ENCODE measurements at regions of chr19 and their contacts with region 1.

Region 1: GRCh38 chr19:49391581-49392399 is 3.7 kb downstream of the KASH5 start:
- DNase-seq: peak; percentile 87
- ATAC-seq: peak; percentile 91
- H3K4me3 Mint-ChIP-seq: no peak overlapping the region
- H3K27ac Mint-ChIP-seq: no peak overlapping the region
- H3K4me1 Mint-ChIP-seq: peaks cover 20% of the 10 kb centered on the region
- H3K27me3 Mint-ChIP-seq: peaks cover 16% of the 10 kb centered on the region
- CTCF ChIP-seq: peak; percentile 58

Region 2: GRCh38 chr19:49347846-49348245 is 43.9 kb before region 1 on chr19:
- CTCF ChIA-PET with region 1: no interaction called
- POLR2A ChIA-PET with region 1: no interaction called
- DNase-seq: peak; percentile 51
- ATAC-seq: peak; percentile 94
- H3K4me3 Mint-ChIP-seq: no peak overlapping the region
- H3K27ac Mint-ChIP-seq: peak overlapping the region; percentile 91
- H3K4me1 Mint-ChIP-seq: peaks cover 3% of the 10 kb centered on the region; the same call in 1 of the 2 replicates
- H3K27me3 Mint-ChIP-seq: no peaks in the 10 kb centered on the region
- CTCF ChIP-seq: no peak

Region 3: GRCh38 chr19:49403404-49404187 is 11.8 kb after region 1 on chr19:
- CTCF ChIA-PET with region 1: interaction called, 22 read pairs
- POLR2A ChIA-PET with region 1: interaction called, 7 read pairs
- DNase-seq: peak; percentile 81
- ATAC-seq: peak; percentile 98
- H3K4me3 Mint-ChIP-seq: peak overlapping the region; percentile 44
- H3K27ac Mint-ChIP-seq: peak overlapping the region; percentile 99
- H3K4me1 Mint-ChIP-seq: peaks cover 45% of the 10 kb centered on the region
- H3K27me3 Mint-ChIP-seq: peaks cover 4% of the 10 kb centered on the region; the same call in 1 of the 2 replicates
- CTCF ChIP-seq: no peak

Region 4: GRCh38 chr19:49421039-49421877 is 29.5 kb after region 1 on chr19:
- CTCF ChIA-PET with region 1: interaction called, 120 read pairs
- POLR2A ChIA-PET with region 1: no interaction called
- DNase-seq: peak; percentile 100
- ATAC-seq: peak; percentile 75
- H3K4me3 Mint-ChIP-seq: peak overlapping the region; percentile 49
- H3K27ac Mint-ChIP-seq: peak overlapping the region; percentile 84
- H3K4me1 Mint-ChIP-seq: peaks cover 78% of the 10 kb centered on the region
- H3K27me3 Mint-ChIP-seq: peaks cover 75% of the 10 kb centered on the region
- CTCF ChIP-seq: no peak

Region 5: GRCh38 chr19:49436369-49437017 is 44.7 kb after region 1 on chr19:
- CTCF ChIA-PET with region 1: interaction called, 33 read pairs
- POLR2A ChIA-PET with region 1: no interaction called
- DNase-seq: peak; percentile 98
- ATAC-seq: peak; percentile 67
- H3K4me3 Mint-ChIP-seq: peak overlapping the region; percentile 66
- H3K27ac Mint-ChIP-seq: no peak overlapping the region
- H3K4me1 Mint-ChIP-seq: peaks cover 35% of the 10 kb centered on the region
- H3K27me3 Mint-ChIP-seq: peaks cover 98% of the 10 kb centered on the region
- CTCF ChIP-seq: no peak

Region 6: GRCh38 chr19:49758292-49758691 is 366.5 kb after region 1 on chr19:
- CTCF ChIA-PET with region 1: no interaction called
- POLR2A ChIA-PET with region 1: no interaction called
- DNase-seq: no peak
- ATAC-seq: no peak
- H3K4me3 Mint-ChIP-seq: no peak overlapping the region
- H3K27ac Mint-ChIP-seq: no peak overlapping the region
- H3K4me1 Mint-ChIP-seq: peaks cover 15% of the 10 kb centered on the region
- H3K27me3 Mint-ChIP-seq: peaks cover 20% of the 10 kb centered on the region
- CTCF ChIP-seq: no peak

Measured in WTC11 (cell line).